ENCODE measurements at regions of chr17 and their contacts with region 1.

Region 1: GRCh38 chr17:73311781-73312641 is at the start of gene CDC42EP4:
- DNase-seq: peak; percentile 70 to 89 (median 76)
- ATAC-seq: peak; percentile 94
- H3K4me3 ChIP-seq: peak within 1 kb of the TSS; percentile 80
- H3K4me3 Mint-ChIP-seq: peak within 1 kb of the TSS; percentile 84 to 91 (median 88)
- H3K27ac ChIP-seq: peak within 1 kb of the TSS; percentile 75
- H3K27ac Mint-ChIP-seq: peak within 1 kb of the TSS in 8 of 9 donors; percentile 5 to 86 (median 62)
- H3K4me1 ChIP-seq: peaks cover 9 to 10% of the 10 kb centered on the region in 2 donors
- H3K4me1 Mint-ChIP-seq: peaks cover 8 to 19% (median 13%) of the 10 kb centered on the region in 7 donors
- H3K27me3 ChIP-seq: no peaks in the 10 kb centered on the region
- H3K27me3 Mint-ChIP-seq: peaks cover 0 to 13% (median 0%) of the 10 kb centered on the region in 5 donors
- total RNA-seq, gene CDC42EP4: 1.4 to 15.8 (median 2.0) TPM

Region 2: GRCh38 chr17:73092523-73093135 is 219.4 kb before region 1 on chr17 and contains the start of gene SLC39A11:
- CTCF ChIA-PET with region 1: no interaction called
- POLR2A ChIA-PET with region 1: no interaction called
- intact Hi-C with region 1: loop called (anchors 5 kb)
- DNase-seq: peak; percentile 77 to 92 (median 85)
- ATAC-seq: peak; percentile 99
- H3K4me3 ChIP-seq: peak within 1 kb of the TSS; percentile 69
- H3K4me3 Mint-ChIP-seq: peak within 1 kb of the TSS; percentile 90 to 100 (median 96)
- H3K27ac ChIP-seq: peak within 1 kb of the TSS; percentile 63
- H3K27ac Mint-ChIP-seq: peak within 1 kb of the TSS; percentile 87 to 99 (median 93)
- H3K4me1 ChIP-seq: peaks cover 7 to 20% of the 10 kb centered on the region in 2 donors
- H3K4me1 Mint-ChIP-seq: peaks cover 0 to 40% (median 32%) of the 10 kb centered on the region in 7 donors
- H3K27me3 ChIP-seq: no peaks in the 10 kb centered on the region
- H3K27me3 Mint-ChIP-seq: peaks cover 0 to 13% (median 0%) of the 10 kb centered on the region in 5 donors
- total RNA-seq, gene SLC39A11: 16.9 to 36.7 (median 21.6) TPM

Region 3: DNA sequence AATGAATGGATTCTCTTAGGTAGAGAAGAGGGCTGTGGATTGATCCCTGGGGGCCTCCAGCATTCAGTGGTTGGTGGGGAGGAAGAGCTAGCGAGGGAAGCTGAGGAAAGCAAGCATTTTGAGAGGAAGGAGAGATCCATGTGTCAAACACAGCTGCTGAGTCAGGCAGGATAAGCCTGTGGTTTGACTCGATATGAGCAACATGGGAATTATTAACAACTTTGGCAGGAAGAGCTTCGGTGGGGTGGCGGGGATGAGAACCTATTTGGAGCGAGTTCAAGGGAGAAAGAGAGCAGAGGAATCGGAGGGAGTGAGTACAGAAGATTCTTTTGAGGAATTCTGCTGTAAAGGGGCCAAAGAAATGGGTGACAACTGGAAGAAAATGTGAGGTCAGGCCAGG is 59.3 kb after region 1 on chr17:
- CTCF ChIA-PET with region 1: interaction called, 3 read pairs
- POLR2A ChIA-PET with region 1: no interaction called
- intact Hi-C with region 1: loop called (anchors 1 kb)
- DNase-seq: no peak
- ATAC-seq: no peak
- H3K4me3 ChIP-seq: no peak overlapping the region
- H3K4me3 Mint-ChIP-seq: no peak overlapping the region
- H3K27ac ChIP-seq: no peak overlapping the region
- H3K27ac Mint-ChIP-seq: no peak overlapping the region
- H3K4me1 ChIP-seq: no peaks in the 10 kb centered on the region
- H3K4me1 Mint-ChIP-seq: peaks cover 0 to 3% (median 0%) of the 10 kb centered on the region in 7 donors
- H3K27me3 ChIP-seq: no peaks in the 10 kb centered on the region
- H3K27me3 Mint-ChIP-seq: peaks cover 0 to 6% (median 0%) of the 10 kb centered on the region in 5 donors

Region 4: GRCh38 chr17:74203439-74204240 is 891.6 kb after region 1 on chr17 and contains the start of gene RPL38:
- CTCF ChIA-PET with region 1: no interaction called
- POLR2A ChIA-PET with region 1: interaction called, 3 read pairs
- intact Hi-C with region 1: loop called in 1 of 2 experiments (anchors 5 kb)
- DNase-seq: peak; percentile 83 to 95 (median 94)
- ATAC-seq: peak; percentile 98
- H3K4me3 ChIP-seq: peak within 1 kb of the TSS; percentile 89
- H3K4me3 Mint-ChIP-seq: peak within 1 kb of the TSS; percentile 85 to 100 (median 98)
- H3K27ac ChIP-seq: peak within 1 kb of the TSS; percentile 86
- H3K27ac Mint-ChIP-seq: peak within 1 kb of the TSS; percentile 89 to 98 (median 96)
- H3K4me1 ChIP-seq: peaks cover 16 to 20% of the 10 kb centered on the region in 2 donors
- H3K4me1 Mint-ChIP-seq: peaks cover 24 to 49% (median 34%) of the 10 kb centered on the region in 7 donors
- H3K27me3 ChIP-seq: peaks cover 0 to 5% of the 10 kb centered on the region in 2 donors
- H3K27me3 Mint-ChIP-seq: peaks cover 8 to 16% (median 11%) of the 10 kb centered on the region in 5 donors
- total RNA-seq, gene RPL38: 1,097 to 2,553 (median 2,002) TPM